ENCODE measurements at regions of chr18 and their contacts with region 1.

Region 1: GRCh38 chr18:9614401-9615279 is at the start of gene PPP4R1:
- DNase-seq: peak; percentile 86 to 89
- ATAC-seq: peak; percentile 75 to 86 (median 84)
- H3K4me3 ChIP-seq: peak within 1 kb of the TSS; percentile 88
- H3K27ac ChIP-seq: peak within 1 kb of the TSS; percentile 91
- H3K4me1 ChIP-seq: peaks cover 21% of the 10 kb centered on the region
- H3K27me3 ChIP-seq: no peaks in the 10 kb centered on the region
- CTCF ChIP-seq: no peak
- total RNA-seq, gene PPP4R1: 27.8 to 36.1 (median 31.7) TPM

Region 2: DNA sequence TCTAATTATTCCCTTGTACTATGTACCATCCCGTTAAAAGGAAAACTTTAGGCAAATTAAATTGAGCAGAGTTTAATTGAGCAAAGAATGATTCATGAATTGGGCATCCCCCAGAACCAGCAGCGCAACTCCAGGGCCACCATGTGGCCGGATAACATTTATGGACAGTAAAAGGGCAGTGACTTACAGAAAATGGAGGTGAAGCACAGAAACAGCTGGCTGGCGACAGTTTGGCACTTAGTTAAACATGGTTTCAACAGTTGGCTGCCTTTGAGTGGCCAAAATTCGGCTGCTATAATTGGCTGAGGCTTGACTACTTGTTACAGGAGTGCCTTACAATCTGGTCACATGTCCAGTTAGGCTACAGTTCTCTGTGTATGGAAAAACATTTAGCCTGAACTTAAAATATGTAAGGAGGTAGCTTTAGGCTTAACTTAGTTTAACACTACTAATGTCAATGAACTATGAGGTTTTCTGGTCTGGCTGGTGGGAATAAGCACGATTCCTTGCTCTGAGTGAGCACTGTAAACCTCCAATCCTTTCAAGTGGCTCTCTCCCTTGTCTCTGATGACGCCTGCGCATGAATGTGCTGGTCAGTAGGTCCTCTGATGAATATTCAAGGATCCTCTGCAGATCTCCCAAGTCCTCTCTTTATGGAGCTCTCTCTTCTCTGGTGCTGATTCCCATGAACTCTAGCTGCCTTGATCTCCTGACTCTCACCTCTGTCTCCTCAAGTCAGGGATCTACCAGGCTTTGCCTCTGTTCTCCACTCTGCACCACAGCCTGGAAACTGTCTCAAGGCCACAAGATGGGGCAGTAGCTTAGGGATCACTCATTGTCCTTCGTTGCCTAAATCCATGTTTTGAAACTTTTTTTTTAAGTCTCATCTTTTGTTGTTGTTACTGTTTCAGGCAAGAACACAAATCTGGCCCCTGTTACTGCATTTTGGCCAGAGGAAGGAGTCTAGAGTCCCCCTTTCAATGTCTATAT is 69.1 kb after region 1 on chr18:
- intact Hi-C with region 1: loop called in 1 of 2 experiments (anchors 5 kb)
- DNase-seq: no peak
- ATAC-seq: peak; percentile 39 to 65 (median 64)
- H3K4me3 ChIP-seq: no peak overlapping the region
- H3K27ac ChIP-seq: no peak overlapping the region
- H3K4me1 ChIP-seq: peaks cover 12% of the 10 kb centered on the region
- H3K27me3 ChIP-seq: no peaks in the 10 kb centered on the region
- CTCF ChIP-seq: peak; percentile 34

Region 3: DNA sequence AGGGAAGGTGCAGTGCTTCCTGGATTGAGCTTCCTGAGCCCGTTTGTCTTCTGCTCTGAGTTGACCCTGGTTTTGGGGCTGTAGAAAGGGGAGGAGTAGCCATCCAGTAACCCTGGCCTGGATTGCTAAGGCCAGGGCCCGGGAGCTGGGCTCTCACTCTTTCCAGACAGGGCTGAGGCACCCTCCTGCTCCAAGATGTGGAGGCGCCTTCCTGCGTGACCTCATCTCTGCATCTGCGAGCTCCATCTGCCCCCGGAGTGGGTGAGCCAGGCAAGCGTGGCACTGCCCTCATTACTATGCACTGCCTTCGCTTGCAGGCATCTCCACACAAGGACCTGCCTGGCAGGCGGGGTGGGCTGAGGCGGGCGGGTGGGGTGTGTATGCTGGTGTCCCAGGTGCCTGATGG is 151.4 kb after region 1 on chr18:
- intact Hi-C with region 1: loop called (anchors 5 to 10 kb)
- DNase-seq: no peak
- ATAC-seq: no peak
- H3K4me3 ChIP-seq: no peak overlapping the region
- H3K27ac ChIP-seq: no peak overlapping the region
- H3K4me1 ChIP-seq: no peaks in the 10 kb centered on the region
- H3K27me3 ChIP-seq: no peaks in the 10 kb centered on the region
- CTCF ChIP-seq: no peak

Region 4: GRCh38 chr18:9771261-9771976 is 156.8 kb after region 1 on chr18:
- intact Hi-C with region 1: loop called (anchors 5 to 10 kb)
- DNase-seq: peak; percentile 86 to 92
- ATAC-seq: peak; percentile 97 to 99 (median 98)
- H3K4me3 ChIP-seq: no peak overlapping the region
- H3K27ac ChIP-seq: no peak overlapping the region
- H3K4me1 ChIP-seq: no peaks in the 10 kb centered on the region
- H3K27me3 ChIP-seq: no peaks in the 10 kb centered on the region
- CTCF ChIP-seq: peak; percentile 98

Region 5: DNA sequence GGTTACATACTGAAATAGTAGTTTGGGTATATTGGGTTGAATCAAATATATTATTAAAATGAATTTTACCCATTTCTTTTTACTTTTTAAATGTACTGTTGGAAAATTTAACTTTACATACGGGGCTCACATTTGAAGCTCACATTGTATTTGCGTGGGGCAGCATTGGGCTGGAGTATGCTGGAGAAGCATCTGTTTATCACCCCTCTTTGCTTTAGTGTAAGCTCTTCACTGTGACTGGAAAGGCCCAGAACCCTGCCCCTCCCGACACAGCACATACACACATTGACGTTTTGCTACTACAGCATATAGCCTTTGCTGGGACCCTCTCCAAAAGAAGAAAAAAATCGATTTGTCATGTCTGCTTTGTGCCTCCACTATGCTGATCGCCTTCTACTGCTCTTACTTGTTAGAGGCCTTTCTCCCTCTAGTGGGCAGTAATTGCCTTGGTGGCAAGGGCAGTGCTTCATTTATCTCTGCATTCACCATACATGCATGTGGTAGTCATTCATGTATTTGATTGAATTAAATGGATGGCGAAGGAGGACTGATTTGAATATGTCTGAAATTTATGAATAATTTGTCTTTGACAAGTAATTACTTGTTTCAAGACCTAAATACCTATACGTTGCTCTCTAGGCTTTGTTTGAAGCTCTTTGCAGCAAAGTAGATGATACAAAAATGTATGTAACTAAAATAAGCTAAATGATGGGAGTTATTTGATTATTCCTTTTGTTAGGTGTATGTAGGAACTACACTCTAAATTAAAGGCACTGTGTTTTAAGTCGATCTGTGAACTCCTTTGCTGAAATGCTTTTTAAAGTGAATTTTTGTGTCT is 336.6 kb after region 1 on chr18:
- intact Hi-C with region 1: loop called in 1 of 2 experiments (anchors 10 kb)
- DNase-seq: no peak
- ATAC-seq: peak; percentile 54 to 76 (median 68)
- H3K4me3 ChIP-seq: no peak overlapping the region
- H3K27ac ChIP-seq: no peak overlapping the region
- H3K4me1 ChIP-seq: peaks cover 12% of the 10 kb centered on the region
- H3K27me3 ChIP-seq: no peaks in the 10 kb centered on the region
- CTCF ChIP-seq: peak; percentile 59

Region 6: GRCh38 chr18:9971313-9971920 is 356.8 kb after region 1 on chr18:
- intact Hi-C with region 1: loop called in 1 of 2 experiments (anchors 1 kb)
- DNase-seq: peak in 1 of 2 donors; percentile 43
- ATAC-seq: peak; percentile 69 to 92 (median 80)
- H3K4me3 ChIP-seq: no peak overlapping the region
- H3K27ac ChIP-seq: no peak overlapping the region
- H3K4me1 ChIP-seq: no peaks in the 10 kb centered on the region
- H3K27me3 ChIP-seq: no peaks in the 10 kb centered on the region
- CTCF ChIP-seq: peak; percentile 81

Measured in psoas muscle (tissue), 8 donors.